ENCODE measurements at regions of chr2 and their contacts with region 1.

Region 1: DNA sequence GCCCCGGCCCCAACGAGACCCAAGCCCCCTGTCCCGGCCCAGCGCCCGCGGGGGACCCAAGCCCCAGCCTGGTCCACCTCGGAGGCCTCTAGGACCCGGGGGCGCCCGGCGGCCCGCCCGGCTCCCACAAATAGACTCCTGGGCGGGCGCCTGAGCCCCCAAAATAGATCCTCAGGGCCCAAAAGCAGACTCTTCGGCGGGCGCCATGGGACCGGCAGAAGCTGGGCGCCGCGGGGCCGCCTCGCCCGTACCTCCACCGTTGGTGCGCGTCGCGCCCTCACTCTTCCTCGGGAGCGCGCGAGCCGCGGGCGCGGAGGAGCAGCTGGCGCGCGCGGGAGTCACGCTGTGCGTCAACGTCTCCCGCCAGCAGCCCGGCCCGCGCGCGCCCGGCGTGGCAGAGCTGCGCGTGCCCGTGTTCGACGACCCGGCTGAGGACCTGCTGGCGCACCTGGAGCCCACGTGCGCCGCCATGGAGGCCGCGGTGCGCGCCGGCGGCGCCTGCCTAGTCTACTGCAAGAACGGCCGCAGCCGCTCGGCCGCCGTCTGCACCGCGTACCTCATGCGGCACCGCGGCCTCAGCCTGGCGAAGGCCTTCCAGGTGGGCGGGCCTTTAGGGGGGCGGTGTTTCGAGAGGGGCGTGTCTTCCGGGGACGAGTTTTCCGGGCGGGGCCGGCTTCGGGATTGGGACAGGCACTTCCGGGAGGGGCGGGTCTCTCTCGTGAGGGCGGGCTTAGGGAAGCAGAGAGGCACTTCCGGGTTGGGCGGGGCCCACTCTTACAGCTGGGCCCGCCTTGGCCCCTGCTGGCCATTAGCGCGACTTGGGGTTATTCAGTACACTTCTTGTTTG is 546 bp downstream of the DUSP28 start:
- DNase-seq: peak; percentile 99
- H3K4me3 Mint-ChIP-seq: peak overlapping the region; percentile 90
- H3K27ac Mint-ChIP-seq: peak overlapping the region; percentile 95
- H3K4me1 Mint-ChIP-seq: peaks cover 75% of the 10 kb centered on the region
- H3K27me3 Mint-ChIP-seq: no peaks in the 10 kb centered on the region

Region 2: GRCh38 chr2:240021488-240022104 is 539.1 kb before region 1 on chr2:
- intact Hi-C with region 1: loop called (anchors 10 kb)
- DNase-seq: peak; percentile 48
- H3K4me3 Mint-ChIP-seq: no peak overlapping the region
- H3K27ac Mint-ChIP-seq: no peak overlapping the region
- H3K4me1 Mint-ChIP-seq: peaks cover 21% of the 10 kb centered on the region
- H3K27me3 Mint-ChIP-seq: no peaks in the 10 kb centered on the region

Region 3: GRCh38 chr2:240434728-240435456 is 125.8 kb before region 1 on chr2:
- intact Hi-C with region 1: loop called (anchors 2 kb)
- DNase-seq: peak; percentile 88
- H3K4me3 Mint-ChIP-seq: peak overlapping the region; percentile 83
- H3K27ac Mint-ChIP-seq: peak overlapping the region; percentile 61
- H3K4me1 Mint-ChIP-seq: no peaks in the 10 kb centered on the region
- H3K27me3 Mint-ChIP-seq: peaks cover 13% of the 10 kb centered on the region

Region 4: DNA sequence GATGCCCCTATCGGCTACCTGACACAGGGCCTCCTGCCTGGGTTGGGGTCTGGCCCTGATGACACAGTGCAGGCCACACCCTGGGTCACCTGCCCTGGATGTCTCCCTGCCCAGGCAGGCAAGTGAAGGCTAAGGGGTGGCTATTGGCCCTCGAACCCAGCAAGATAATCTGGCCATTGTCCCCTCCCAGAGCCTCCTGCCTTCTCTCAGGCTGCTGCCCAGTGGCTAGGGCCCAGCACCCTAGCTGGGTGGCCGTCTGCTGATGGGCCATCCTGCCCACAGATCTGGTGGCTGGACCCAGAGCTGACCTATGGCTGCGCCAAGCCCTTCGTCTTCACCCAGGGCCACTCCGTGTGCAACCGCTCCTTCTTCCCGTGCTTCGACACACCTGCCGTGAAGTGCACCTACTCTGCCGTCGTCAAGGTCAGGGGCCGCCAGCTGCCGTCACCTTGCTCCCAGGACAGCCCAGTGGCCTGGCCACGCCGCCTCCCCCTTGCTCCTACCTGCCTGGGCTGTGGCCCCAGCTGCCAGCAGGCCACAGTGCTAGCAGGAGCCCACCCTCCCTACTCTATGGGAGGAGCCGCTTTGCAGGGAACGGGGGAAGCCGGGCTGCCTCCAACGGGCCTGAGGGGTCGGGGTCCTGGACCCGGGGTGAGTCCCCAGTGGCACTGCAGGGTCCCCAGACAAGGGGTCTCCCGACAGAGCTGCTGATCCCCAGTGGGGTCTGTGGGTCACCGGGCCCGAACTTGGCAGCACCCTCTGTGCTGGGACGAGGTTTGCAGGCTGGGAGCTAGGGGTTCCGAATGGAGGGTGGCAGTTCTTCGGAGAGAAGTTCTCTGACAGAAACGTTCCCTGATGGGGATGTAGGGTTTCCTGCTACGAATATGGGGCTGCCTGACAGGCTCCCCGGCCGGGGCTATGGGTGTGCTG is 11.7 kb after region 1 on chr2:
- intact Hi-C with region 1: no loop called
- DNase-seq: no peak
- H3K4me3 Mint-ChIP-seq: no peak overlapping the region
- H3K27ac Mint-ChIP-seq: no peak overlapping the region
- H3K4me1 Mint-ChIP-seq: peaks cover 29% of the 10 kb centered on the region
- H3K27me3 Mint-ChIP-seq: no peaks in the 10 kb centered on the region

Region 5: DNA sequence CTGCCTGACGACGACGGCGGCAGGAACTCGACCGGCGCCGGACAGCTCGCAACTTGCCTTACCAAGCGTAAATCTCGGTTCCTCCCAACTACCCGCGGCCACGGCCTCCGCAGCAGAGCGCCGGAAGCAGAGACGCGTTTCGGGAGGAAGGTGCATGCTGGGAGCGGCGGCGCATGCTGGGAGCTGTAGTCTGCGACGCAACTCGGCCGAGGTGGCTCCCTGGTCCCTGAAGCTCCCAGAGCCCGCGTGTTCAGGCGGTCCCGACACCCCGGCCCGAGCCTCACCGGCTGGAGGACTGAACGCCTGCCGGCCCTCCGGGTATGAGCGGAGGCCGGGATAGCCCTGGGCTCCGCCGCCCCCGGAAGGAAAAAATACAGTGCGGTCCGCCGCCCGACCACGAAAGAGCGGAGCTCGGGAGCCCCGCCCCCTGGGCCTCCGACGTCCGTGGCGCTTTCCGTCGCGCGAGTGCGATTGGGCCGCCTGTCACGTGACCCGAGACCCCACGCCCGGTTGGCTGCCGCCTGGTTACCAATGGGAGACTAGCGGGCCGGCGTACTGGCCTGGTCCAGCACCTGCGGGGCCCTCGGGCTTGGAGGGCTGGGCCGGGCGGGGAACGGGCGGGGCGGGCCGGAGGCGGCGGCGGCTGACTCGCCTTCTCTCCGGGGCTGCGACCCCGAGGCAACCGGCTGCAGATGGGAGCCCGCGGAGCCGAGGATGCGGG is 25.7 kb after region 1 on chr2 and contains the start of gene CAPN10:
- intact Hi-C with region 1: loop called (anchors 1 kb)
- DNase-seq: peak; percentile 97
- H3K4me3 Mint-ChIP-seq: peak within 1 kb of the TSS; percentile 96
- H3K27ac Mint-ChIP-seq: peak within 1 kb of the TSS; percentile 93
- H3K4me1 Mint-ChIP-seq: peaks cover 38% of the 10 kb centered on the region
- H3K27me3 Mint-ChIP-seq: no peaks in the 10 kb centered on the region
- total RNA-seq, gene CAPN10: 49.8 and 55.4 TPM in 2 replicates

Region 6: DNA sequence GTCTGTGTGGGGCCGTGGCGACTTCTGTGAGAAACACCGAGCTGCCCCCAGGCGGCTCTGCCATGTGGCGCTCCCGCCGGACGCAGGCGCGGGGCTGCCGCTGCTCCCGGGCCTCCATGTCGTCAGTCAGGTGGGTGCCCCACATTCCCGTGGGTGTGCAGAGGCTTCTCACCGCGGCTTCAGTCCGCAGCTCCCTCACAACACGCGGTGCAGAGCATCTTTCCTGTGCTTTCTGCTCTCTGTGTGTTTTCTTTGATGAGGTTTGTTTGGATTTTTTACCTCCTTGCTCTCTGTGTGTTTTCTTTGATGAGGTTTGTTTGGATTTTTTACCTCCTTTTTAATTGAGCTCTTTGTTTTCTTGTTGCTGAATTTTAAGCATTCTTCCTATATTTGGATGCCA is 143.9 kb after region 1 on chr2:
- intact Hi-C with region 1: loop called (anchors 10 kb)
- DNase-seq: no peak
- H3K4me3 Mint-ChIP-seq: peak overlapping the region; percentile 42
- H3K27ac Mint-ChIP-seq: peak overlapping the region; percentile 32
- H3K4me1 Mint-ChIP-seq: peaks cover 13% of the 10 kb centered on the region
- H3K27me3 Mint-ChIP-seq: peaks cover 33% of the 10 kb centered on the region

Region 7: GRCh38 chr2:241609859-241610793 is 1049.4 kb after region 1 on chr2:
- intact Hi-C with region 1: loop called (anchors 10 kb)
- DNase-seq: peak; percentile 88
- H3K4me3 Mint-ChIP-seq: peak overlapping the region; percentile 78
- H3K27ac Mint-ChIP-seq: peak overlapping the region; percentile 83
- H3K4me1 Mint-ChIP-seq: peaks cover 18% of the 10 kb centered on the region
- H3K27me3 Mint-ChIP-seq: no peaks in the 10 kb centered on the region